ENCODE measurements at regions of chr11 and their contacts with region 1.

Region 1: GRCh38 chr11:73965076-73965860 is 14.4 kb downstream of the DNAJB13 start:
- DNase-seq: peak in 1 of 2 donors; percentile 43
- H3K4me3 ChIP-seq: no peak overlapping the region
- H3K27ac ChIP-seq: no peak overlapping the region
- H3K4me1 ChIP-seq: peaks cover 0 to 10% (median 6%) of the 10 kb centered on the region in 4 donors
- H3K27me3 ChIP-seq: no peaks in the 10 kb centered on the region
- CTCF ChIP-seq: no peak

Region 2: GRCh38 chr11:74024261-74025029 is 59.2 kb after region 1 on chr11:
- intact Hi-C with region 1: loop called (anchors 10 kb)
- DNase-seq: peak; percentile 86 to 90
- H3K4me3 ChIP-seq: no peak overlapping the region
- H3K27ac ChIP-seq: peak overlapping the region; percentile 12 to 27
- H3K4me1 ChIP-seq: peaks cover 0 to 27% (median 10%) of the 10 kb centered on the region in 4 donors
- H3K27me3 ChIP-seq: no peaks in the 10 kb centered on the region
- CTCF ChIP-seq: no peak

Region 3: DNA sequence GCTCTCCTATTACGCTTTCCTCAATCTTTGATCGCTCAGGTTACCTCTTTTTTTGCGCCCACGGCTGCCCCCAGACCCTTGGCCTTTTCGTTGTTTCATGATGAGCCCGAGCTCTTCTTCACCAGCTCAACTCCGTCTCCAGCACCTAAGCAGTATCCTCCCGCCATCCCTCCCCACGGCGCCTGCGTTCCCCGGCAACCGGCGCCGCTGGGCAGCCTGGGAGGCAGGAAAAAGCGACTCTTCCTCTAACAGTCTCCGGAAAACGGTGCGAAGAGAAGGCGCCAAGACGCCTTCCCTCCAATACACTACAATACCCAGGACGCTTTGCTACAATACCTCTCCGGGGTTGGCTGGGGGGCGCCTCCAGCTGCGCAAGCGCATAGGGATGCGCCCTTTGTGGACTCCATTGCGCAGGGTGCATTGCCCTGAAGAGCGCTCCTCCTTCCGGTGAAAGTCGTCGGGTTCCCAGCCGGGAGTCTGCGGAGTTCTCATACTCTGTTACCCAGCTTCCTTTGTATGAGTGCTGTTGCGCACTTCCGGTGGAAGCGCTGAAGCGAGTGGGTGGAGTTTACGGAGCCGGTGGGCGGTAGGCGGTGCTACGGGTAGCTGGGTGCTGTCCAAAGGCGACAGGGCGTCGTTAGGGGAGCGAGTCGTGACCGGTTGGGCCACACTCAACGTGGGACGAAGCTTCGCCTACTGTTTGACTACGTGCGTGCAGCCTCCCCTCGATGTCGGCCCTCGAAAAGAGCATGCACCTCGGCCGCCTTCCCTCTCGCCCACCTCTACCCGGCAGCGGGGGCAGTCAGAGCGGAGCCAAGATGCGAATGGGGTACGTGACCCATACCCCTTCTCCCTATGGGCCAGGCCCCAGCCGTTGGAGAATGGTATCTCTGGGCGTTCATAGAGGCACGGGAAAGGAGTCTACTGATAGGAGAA is 205.7 kb after region 1 on chr11 and contains the starts of genes C2CD3 and PPME1:
- intact Hi-C with region 1: loop called (anchors 10 kb)
- DNase-seq: peak; percentile 98 to 99
- H3K4me3 ChIP-seq: peak within 1 kb of the TSS; percentile 85 to 91
- H3K27ac ChIP-seq: peak within 1 kb of the TSS; percentile 90 to 96
- H3K4me1 ChIP-seq: peaks cover 0 to 43% (median 16%) of the 10 kb centered on the region in 4 donors
- H3K27me3 ChIP-seq: no peaks in the 10 kb centered on the region
- CTCF ChIP-seq: peak in 1 of 2 experiments; percentile 3